Endothelial cell of umbilical vein (primary cell): ENCODE measurements at regions of chr15 and their contacts with region 1.

Region 1: DNA sequence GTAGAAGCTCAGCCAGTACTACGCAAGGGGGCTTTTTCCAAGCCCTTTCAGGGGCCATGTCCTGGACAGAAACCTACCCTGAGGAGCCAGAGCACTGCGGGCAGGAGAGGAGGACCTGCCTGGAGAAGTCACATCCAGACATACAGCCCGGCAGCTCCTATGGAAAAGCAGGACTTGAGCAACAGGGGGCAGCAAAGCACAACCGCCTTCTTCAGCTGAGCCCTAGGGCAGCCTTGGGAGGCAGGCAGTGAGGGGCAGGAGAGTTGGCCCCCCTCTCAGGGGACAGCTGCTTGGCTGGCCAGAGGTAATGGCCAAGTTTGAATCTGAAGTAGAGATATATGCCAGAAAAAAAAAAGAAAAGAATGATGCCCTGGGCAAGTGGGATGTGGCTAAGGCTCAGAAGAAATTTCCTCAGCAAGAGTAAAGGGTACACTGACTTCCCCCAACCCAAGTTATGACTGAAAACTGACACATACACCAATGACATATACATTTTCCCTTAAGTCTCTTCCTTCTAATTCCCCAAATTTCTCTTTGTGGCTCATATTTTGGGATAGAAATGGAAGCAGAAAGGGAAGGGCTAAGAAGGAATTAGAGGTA is 56.9 kb downstream of the CYP19A1 start:
- DNase-seq: peak; percentile 65
- H3K4me3 ChIP-seq: no peak overlapping the region
- H3K27ac ChIP-seq: no peak overlapping the region
- H3K4me1 ChIP-seq: no peaks in the 10 kb centered on the region
- H3K27me3 ChIP-seq: peaks cover 70 to 71% of the 10 kb centered on the region in 2 experiments
- CTCF ChIP-seq: peak; percentile 47 to 83
- POLR2A ChIP-seq: no peak

Region 2: GRCh38 chr15:49918121-49918520 is 1363.3 kb before region 1 on chr15:
- CTCF ChIA-PET with region 1: no interaction called
- POLR2A ChIA-PET with region 1: no interaction called
- dilution Hi-C with region 1: no loop called
- intact Hi-C with region 1: no loop called
- DNase-seq: peak; percentile 1
- H3K4me3 ChIP-seq: no peak overlapping the region
- H3K27ac ChIP-seq: no peak overlapping the region
- H3K4me1 ChIP-seq: no peaks in the 10 kb centered on the region
- H3K27me3 ChIP-seq: no peaks in the 10 kb centered on the region
- CTCF ChIP-seq: no peak
- POLR2A ChIP-seq: no peak

Region 3: GRCh38 chr15:51112078-51112477 is 169.4 kb before region 1 on chr15:
- CTCF ChIA-PET with region 1: no interaction called
- POLR2A ChIA-PET with region 1: no interaction called
- dilution Hi-C with region 1: no loop called
- intact Hi-C with region 1: no loop called
- DNase-seq: no peak
- H3K4me3 ChIP-seq: no peak overlapping the region
- H3K27ac ChIP-seq: no peak overlapping the region
- H3K4me1 ChIP-seq: peaks cover 5% of the 10 kb centered on the region
- H3K27me3 ChIP-seq: no peaks in the 10 kb centered on the region
- CTCF ChIP-seq: no peak
- POLR2A ChIP-seq: no peak

Region 4: GRCh38 chr15:51267703-51268083 is 13.8 kb before region 1 on chr15:
- CTCF ChIA-PET with region 1: interaction called, 30 read pairs
- POLR2A ChIA-PET with region 1: no interaction called
- dilution Hi-C with region 1: no loop called
- intact Hi-C with region 1: no loop called
- DNase-seq: no peak
- H3K4me3 ChIP-seq: no peak overlapping the region
- H3K27ac ChIP-seq: no peak overlapping the region
- H3K4me1 ChIP-seq: no peaks in the 10 kb centered on the region
- H3K27me3 ChIP-seq: peaks cover 66 to 82% of the 10 kb centered on the region in 2 experiments
- CTCF ChIP-seq: no peak
- POLR2A ChIP-seq: no peak

Region 5: GRCh38 chr15:51335538-51336321 is 54.3 kb after region 1 on chr15:
- CTCF ChIA-PET with region 1: interaction called, 19 read pairs
- POLR2A ChIA-PET with region 1: no interaction called
- dilution Hi-C with region 1: no loop called
- intact Hi-C with region 1: loop called (anchors 5 kb)
- DNase-seq: no peak
- H3K4me3 ChIP-seq: no peak overlapping the region
- H3K27ac ChIP-seq: no peak overlapping the region
- H3K4me1 ChIP-seq: peaks cover 16% of the 10 kb centered on the region
- H3K27me3 ChIP-seq: peaks cover 85 to 87% of the 10 kb centered on the region in 2 experiments
- CTCF ChIP-seq: no peak
- POLR2A ChIP-seq: no peak

Region 6: DNA sequence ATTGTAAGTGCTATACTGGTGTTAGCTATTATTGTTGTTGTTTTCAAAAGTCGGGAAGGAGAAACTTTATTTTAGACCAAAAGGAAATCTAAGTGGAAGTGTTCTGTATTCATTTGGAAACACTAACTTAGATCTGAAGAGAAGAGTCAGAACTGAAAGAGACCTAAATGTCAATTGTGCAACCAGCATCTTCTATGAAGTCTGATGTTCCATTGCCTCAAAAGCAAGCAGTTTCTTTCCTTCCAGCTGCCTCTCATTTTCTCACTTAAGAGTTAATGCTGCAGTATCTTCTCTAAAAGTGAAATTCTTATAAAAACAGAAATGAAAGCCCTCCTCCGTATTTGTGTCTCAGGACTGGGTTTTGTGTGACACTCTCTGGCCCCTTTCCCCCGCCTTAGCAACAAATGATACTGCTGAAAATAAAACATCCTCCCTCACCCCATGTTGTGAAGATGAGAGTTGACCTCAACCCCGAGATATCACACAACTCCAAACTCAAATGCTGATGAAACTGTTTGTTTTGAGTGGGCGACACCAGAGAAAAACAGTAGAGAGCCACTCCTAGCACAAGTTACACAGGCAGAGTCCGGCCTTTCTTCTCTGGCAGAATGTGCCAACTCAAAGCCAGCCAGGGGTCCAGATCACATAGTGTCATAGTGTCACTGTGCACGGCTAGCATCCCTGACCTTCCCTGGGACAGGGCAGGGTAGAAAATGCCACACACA is 108.9 kb after region 1 on chr15:
- CTCF ChIA-PET with region 1: interaction called, 20 read pairs
- POLR2A ChIA-PET with region 1: no interaction called
- dilution Hi-C with region 1: no loop called
- intact Hi-C with region 1: no loop called
- DNase-seq: no peak
- H3K4me3 ChIP-seq: no peak overlapping the region
- H3K27ac ChIP-seq: no peak overlapping the region
- H3K4me1 ChIP-seq: no peaks in the 10 kb centered on the region
- H3K27me3 ChIP-seq: peaks cover 30 to 31% of the 10 kb centered on the region in 2 experiments
- CTCF ChIP-seq: no peak
- POLR2A ChIP-seq: no peak

Region 7: GRCh38 chr15:51499379-51499976 is 218.0 kb after region 1 on chr15:
- CTCF ChIA-PET with region 1: interaction called, 21 read pairs
- POLR2A ChIA-PET with region 1: no interaction called
- dilution Hi-C with region 1: no loop called
- intact Hi-C with region 1: loop called (anchors 2 kb)
- DNase-seq: peak; percentile 59
- H3K4me3 ChIP-seq: no peak overlapping the region
- H3K27ac ChIP-seq: no peak overlapping the region
- H3K4me1 ChIP-seq: peaks cover 19% of the 10 kb centered on the region
- H3K27me3 ChIP-seq: no peaks in the 10 kb centered on the region
- CTCF ChIP-seq: peak; percentile 61 to 66
- POLR2A ChIP-seq: no peak

Region 8: DNA sequence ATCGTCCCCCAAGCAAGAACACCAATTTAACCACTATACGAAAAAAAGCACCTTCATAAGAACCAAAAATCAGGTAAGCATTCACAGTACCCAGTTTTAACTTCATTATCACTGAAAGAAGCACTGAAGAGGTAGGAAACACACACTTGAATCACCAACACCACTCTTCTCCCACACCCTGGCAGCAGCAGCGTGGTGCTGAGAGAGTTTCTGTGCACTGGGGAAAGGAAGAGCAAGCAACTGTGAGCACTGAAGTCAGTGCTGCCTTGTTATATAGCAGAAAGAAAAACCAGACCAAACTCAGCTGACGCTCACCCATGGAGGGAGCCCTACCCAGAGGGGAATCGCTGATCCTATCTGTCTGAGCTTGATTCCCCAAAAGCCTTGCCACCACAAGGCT is 242.9 kb after region 1 on chr15:
- CTCF ChIA-PET with region 1: no interaction called
- POLR2A ChIA-PET with region 1: no interaction called
- dilution Hi-C with region 1: no loop called
- intact Hi-C with region 1: no loop called
- DNase-seq: no peak
- H3K4me3 ChIP-seq: no peak overlapping the region
- H3K27ac ChIP-seq: no peak overlapping the region
- H3K4me1 ChIP-seq: no peaks in the 10 kb centered on the region
- H3K27me3 ChIP-seq: no peaks in the 10 kb centered on the region
- CTCF ChIP-seq: no peak
- POLR2A ChIP-seq: no peak

Region 9: DNA sequence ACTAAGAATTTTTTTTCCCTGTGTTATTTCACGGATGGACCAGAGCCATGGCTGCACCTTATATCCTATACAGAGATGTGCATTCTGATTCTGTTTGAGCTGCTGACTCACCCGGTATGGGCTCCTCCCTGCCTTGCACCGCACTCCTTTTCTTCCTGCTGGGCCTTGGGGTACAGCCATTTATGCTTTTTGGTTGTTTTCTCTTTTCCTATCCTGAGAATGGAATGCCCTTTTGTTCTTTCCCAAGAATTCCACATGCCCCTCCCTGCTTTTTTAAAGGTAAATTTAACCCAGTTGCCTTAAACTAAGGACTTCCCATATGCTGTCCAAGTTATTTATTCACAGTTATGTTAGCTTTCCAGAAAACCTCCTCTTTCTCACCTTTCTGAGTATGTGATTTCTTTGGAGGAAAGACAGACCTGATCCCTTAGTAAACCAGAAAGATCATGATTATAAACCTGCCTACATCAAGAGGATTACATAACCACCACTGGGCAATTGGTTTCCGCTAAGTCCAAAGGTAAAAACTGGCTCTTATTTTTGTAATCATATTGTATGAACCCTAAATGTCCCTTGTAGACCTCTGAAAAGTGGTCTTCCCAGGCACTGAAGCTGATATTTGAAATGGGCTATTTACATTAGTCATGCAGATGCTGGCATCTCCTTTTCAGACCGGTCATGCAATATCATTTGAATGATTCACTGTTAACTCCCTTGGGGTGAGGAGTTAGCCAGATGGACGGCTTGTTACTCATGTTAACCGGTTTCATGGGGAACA is 593.5 kb after region 1 on chr15:
- CTCF ChIA-PET with region 1: no interaction called
- POLR2A ChIA-PET with region 1: no interaction called
- dilution Hi-C with region 1: no loop called
- intact Hi-C with region 1: no loop called
- DNase-seq: peak; percentile 92
- H3K4me3 ChIP-seq: no peak overlapping the region
- H3K27ac ChIP-seq: peak overlapping the region; percentile 98
- H3K4me1 ChIP-seq: peaks cover 42% of the 10 kb centered on the region
- H3K27me3 ChIP-seq: no peaks in the 10 kb centered on the region
- CTCF ChIP-seq: no peak
- POLR2A ChIP-seq: no peak